ENCODE measurements at regions of chr4 and their contacts with region 1.

Region 1: GRCh38 chr4:148664636-148665035 is 222.4 kb upstream of the NR3C2 start:
- DNase-seq: no peak
- H3K4me3 ChIP-seq: no peak overlapping the region
- H3K27ac ChIP-seq: no peak overlapping the region
- H3K4me1 ChIP-seq: no peaks in the 10 kb centered on the region
- H3K27me3 ChIP-seq: no peaks in the 10 kb centered on the region
- CTCF ChIP-seq: no peak

Region 2: DNA sequence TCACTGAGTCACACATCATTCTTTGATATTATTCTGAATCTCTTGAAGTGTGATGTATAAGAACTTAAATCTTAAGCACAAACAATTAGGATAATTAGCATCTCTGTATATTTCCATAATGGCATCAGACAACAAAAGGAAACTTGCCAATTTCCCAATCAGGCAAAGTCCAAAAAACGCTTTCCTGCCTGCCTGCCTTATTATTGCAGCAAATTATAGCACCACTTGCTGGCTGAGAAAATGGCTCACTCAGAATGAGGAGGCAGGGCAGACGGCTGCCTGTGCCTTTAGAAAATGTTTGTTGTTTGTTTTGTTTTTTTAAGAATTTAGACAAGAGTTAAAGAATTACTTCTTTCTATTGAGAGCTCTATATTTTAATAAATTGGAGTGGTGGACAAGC is 194.7 kb before region 1 on chr4:
- CTCF ChIA-PET with region 1: no interaction called
- POLR2A ChIA-PET with region 1: no interaction called
- intact Hi-C with region 1: no loop called
- DNase-seq: no peak
- H3K4me3 ChIP-seq: no peak overlapping the region
- H3K27ac ChIP-seq: no peak overlapping the region
- H3K4me1 ChIP-seq: no peaks in the 10 kb centered on the region
- H3K27me3 ChIP-seq: no peaks in the 10 kb centered on the region
- CTCF ChIP-seq: no peak

Region 3: GRCh38 chr4:148716431-148717052 is 51.9 kb after region 1 on chr4:
- CTCF ChIA-PET with region 1: interaction called, 12 read pairs
- POLR2A ChIA-PET with region 1: no interaction called
- intact Hi-C with region 1: no loop called
- DNase-seq: peak in 1 of 2 experiments; percentile 16
- H3K4me3 ChIP-seq: no peak overlapping the region
- H3K27ac ChIP-seq: no peak overlapping the region
- H3K4me1 ChIP-seq: no peaks in the 10 kb centered on the region
- H3K27me3 ChIP-seq: no peaks in the 10 kb centered on the region
- CTCF ChIP-seq: no peak